Tibial artery (tissue), 4 donors: ENCODE measurements at regions of chr2 and their contacts with region 1.

Region 1: GRCh38 chr2:189661148-189661956 is at the start of gene ASNSD1:
- DNase-seq: peak; percentile 99 to 100
- H3K4me3 ChIP-seq: peak within 1 kb of the TSS; percentile 94 to 96
- H3K27ac ChIP-seq: peak within 1 kb of the TSS; percentile 91 to 94
- H3K4me1 ChIP-seq: peaks cover 0 to 46% (median 19%) of the 10 kb centered on the region in 4 donors
- H3K27me3 ChIP-seq: no peaks in the 10 kb centered on the region
- CTCF ChIP-seq: peak; percentile 92 to 99

Region 2: DNA sequence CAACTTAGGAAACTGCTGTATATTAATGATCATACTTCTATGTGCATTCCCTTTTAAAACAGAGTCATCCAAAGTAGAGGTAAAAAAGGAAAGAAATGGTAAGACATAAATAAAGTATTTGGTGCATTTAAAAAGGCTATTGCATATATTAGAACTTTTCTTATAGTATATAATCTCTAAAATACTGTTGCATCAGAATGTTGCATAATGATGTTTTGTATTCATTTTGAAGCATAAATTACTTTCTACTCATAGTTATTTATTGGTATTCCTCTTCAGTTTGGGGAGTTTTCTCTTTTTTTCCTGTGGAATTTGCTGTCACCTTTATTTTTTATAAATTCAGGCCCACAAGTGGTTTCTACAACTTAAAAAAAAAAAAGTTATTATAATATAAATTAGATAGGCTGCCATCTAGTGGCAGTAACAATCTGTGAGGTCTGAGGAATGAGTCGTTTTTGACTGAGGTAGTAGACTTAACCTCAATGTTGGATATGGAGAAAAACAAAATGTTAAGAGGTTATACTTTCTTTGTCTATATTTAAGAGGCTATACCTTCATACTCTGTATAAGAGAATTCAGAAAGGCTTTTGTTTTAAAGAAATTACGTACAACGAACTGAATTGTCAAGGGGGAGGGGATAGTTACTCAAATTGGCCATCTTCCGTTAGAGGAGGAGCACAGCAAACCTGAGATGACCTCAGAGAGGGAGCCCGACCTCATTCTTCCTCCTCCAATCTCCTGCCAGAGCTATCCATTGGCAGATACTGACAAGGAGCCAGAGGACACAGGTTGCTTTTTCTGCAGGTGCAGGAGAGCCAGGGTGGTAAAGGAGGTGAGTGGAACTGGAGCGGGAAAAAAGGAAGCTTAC is 36.9 kb after region 1 on chr2:
- intact Hi-C with region 1: loop called (anchors 5 kb)
- DNase-seq: peak in 1 of 2 donors; percentile 36
- H3K4me3 ChIP-seq: no peak overlapping the region
- H3K27ac ChIP-seq: peak overlapping the region in 1 of 2 donors; percentile 3
- H3K4me1 ChIP-seq: no peaks in the 10 kb centered on the region
- H3K27me3 ChIP-seq: no peaks in the 10 kb centered on the region
- CTCF ChIP-seq: peak; percentile 49 to 64

Region 3: GRCh38 chr2:189783927-189784867 is 122.8 kb after region 1 on chr2 and contains the starts of genes ORMDL1 and PMS1:
- intact Hi-C with region 1: loop called (anchors 10 kb)
- DNase-seq: peak; percentile 94 to 97
- H3K4me3 ChIP-seq: peak within 1 kb of the TSS; percentile 62 to 69
- H3K27ac ChIP-seq: peak within 1 kb of the TSS; percentile 90
- H3K4me1 ChIP-seq: peaks cover 4 to 36% (median 18%) of the 10 kb centered on the region in 4 donors
- H3K27me3 ChIP-seq: no peaks in the 10 kb centered on the region
- CTCF ChIP-seq: no peak